ENCODE measurements at regions of chr10 and their contacts with region 1.

Region 1: GRCh38 chr10:119416855-119417254 is 125.7 kb downstream of the RGS10 start:
- DNase-seq: peak; percentile 45 to 78 (median 76)
- H3K4me3 ChIP-seq: no peak overlapping the region
- H3K27ac ChIP-seq: no peak overlapping the region
- H3K4me1 ChIP-seq: peaks cover 38% of the 10 kb centered on the region
- H3K27me3 ChIP-seq: no peaks in the 10 kb centered on the region
- CTCF ChIP-seq: peak; percentile 29 to 72 (median 45)
- EP300 ChIP-seq: no peak
- POLR2A ChIP-seq: no peak

Region 2: DNA sequence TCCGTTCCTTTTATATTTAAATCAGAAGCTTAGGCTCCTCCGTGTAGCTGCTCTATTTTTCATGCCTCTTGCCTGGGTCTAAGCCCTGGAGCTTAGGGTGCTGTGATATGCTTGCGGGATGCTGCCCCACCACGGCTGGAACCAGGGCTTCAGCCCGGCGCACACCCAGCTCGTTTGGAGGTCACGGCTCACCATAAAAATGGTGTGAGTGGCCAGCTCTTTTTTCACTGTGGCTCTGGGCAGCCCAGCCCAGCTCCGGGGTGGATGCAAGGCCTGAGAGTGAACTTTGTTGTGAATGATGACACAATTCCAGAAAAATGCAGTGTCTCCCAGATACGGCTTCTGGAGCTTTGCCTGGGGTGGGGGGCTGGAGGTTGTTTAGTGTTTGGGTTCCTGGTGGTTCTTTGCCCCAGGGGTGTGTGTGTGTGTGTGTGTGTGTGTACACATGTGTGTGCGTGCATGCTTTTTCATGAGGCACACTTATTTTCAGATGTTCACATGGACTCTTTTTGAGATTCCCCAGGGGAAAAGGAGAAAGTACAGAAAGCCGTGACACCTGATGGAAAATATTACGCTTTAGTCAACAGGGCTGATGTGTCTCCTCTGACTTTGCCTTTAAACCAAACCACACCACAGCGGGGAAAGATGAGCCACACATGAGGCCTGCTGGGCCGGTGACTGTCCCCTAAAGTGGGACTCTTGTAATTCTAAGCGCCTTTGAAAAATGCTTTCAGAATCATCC is 163.3 kb before region 1 on chr10:
- intact Hi-C with region 1: loop called in 1 of 4 experiments (anchors 10 kb)
- DNase-seq: peak; percentile 87 to 91 (median 89)
- H3K4me3 ChIP-seq: no peak overlapping the region
- H3K27ac ChIP-seq: peak overlapping the region; percentile 86 to 91
- H3K4me1 ChIP-seq: peaks cover 51% of the 10 kb centered on the region
- H3K27me3 ChIP-seq: no peaks in the 10 kb centered on the region
- CTCF ChIP-seq: peak in 1 of 3 donors; percentile 19
- EP300 ChIP-seq: peak; percentile 13
- POLR2A ChIP-seq: no peak

Region 3: DNA sequence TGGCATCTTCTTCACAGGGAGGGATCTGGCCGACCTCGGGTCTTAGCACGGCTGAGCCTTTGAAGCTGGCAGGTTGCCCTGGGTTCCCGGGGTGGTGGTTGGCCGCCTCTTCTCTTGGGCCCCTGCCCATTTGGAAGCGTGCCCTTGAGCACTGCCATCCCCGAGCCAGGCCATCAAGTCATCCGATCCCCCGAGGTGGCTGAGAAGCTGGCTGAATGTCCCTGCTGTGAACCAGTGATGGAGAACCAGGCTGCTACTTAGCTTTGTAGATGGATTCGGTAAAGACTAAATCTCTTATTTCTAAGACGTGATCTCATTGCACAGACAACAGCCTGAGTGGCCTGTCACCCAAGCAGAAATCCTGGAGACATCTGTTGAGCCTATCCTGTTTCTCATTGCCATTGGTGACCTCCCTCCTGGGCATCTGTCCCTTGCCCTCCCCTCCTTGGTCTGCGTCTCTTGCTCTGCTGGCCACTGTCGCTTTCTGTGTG is 135.2 kb before region 1 on chr10:
- intact Hi-C with region 1: loop called in 1 of 4 experiments (anchors 10 kb)
- DNase-seq: peak; percentile 52 to 83 (median 78)
- H3K4me3 ChIP-seq: no peak overlapping the region
- H3K27ac ChIP-seq: no peak overlapping the region
- H3K4me1 ChIP-seq: peaks cover 40% of the 10 kb centered on the region
- H3K27me3 ChIP-seq: no peaks in the 10 kb centered on the region
- CTCF ChIP-seq: no peak
- EP300 ChIP-seq: no peak
- POLR2A ChIP-seq: no peak

Region 4: DNA sequence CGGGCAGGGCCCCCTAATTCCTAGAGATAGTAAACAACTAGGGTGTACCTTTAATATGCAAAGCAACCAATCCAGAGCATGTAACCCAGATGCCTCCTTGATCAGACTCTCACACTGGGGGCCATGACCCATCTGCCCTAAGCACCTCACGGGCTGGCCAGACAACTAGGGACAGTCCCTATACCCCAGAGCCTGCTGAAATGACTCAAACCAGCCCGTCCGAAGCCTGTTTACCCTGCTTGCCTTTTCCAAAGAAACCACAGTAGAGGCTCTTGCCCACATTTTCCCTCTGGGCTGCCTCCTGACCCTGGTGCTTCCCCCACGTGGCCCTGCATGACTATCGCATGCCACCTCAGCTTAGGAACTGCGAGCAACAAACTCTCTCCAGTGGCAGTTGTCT is 79.4 kb after region 1 on chr10:
- intact Hi-C with region 1: no loop called
- DNase-seq: no peak
- H3K4me3 ChIP-seq: no peak overlapping the region
- H3K27ac ChIP-seq: no peak overlapping the region
- H3K4me1 ChIP-seq: peaks cover 8% of the 10 kb centered on the region
- H3K27me3 ChIP-seq: no peaks in the 10 kb centered on the region
- CTCF ChIP-seq: no peak
- EP300 ChIP-seq: no peak
- POLR2A ChIP-seq: no peak

Measured in ovary (tissue), 10 donors.